Heart left ventricle (tissue), 16 donors: ENCODE measurements at regions of chr12 and their contacts with region 1.

Region 1: GRCh38 chr12:56763753-56764657 is 881 bp downstream of the HSD17B6 start:
- DNase-seq: no peak
- ATAC-seq: no peak
- H3K4me3 ChIP-seq: no peak overlapping the region
- H3K27ac ChIP-seq: peak overlapping the region in 1 of 12 donors; percentile 51
- H3K4me1 ChIP-seq: no peaks in the 10 kb centered on the region
- H3K27me3 ChIP-seq: no peaks in the 10 kb centered on the region
- CTCF ChIP-seq: no peak
- POLR2A ChIP-seq: no peak

Region 2: GRCh38 chr12:56724972-56725722 is 38.9 kb before region 1 on chr12 and contains the start of gene NACA:
- intact Hi-C with region 1: no loop called
- DNase-seq: peak; percentile 99 to 100 (median 99)
- ATAC-seq: peak; percentile 97 to 98 (median 97)
- H3K4me3 ChIP-seq: peak within 1 kb of the TSS; percentile 68 to 98 (median 82)
- H3K27ac ChIP-seq: peak within 1 kb of the TSS; percentile 79 to 97 (median 93)
- H3K4me1 ChIP-seq: peaks cover 9 to 54% (median 40%) of the 10 kb centered on the region in 12 donors
- H3K27me3 ChIP-seq: no peaks in the 10 kb centered on the region
- CTCF ChIP-seq: peak in 1 of 12 donors; percentile 15
- POLR2A ChIP-seq: peak in 1 of 2 donors; percentile 86
- total RNA-seq, gene NACA: 361 to 741 (median 537) TPM

Region 3: DNA sequence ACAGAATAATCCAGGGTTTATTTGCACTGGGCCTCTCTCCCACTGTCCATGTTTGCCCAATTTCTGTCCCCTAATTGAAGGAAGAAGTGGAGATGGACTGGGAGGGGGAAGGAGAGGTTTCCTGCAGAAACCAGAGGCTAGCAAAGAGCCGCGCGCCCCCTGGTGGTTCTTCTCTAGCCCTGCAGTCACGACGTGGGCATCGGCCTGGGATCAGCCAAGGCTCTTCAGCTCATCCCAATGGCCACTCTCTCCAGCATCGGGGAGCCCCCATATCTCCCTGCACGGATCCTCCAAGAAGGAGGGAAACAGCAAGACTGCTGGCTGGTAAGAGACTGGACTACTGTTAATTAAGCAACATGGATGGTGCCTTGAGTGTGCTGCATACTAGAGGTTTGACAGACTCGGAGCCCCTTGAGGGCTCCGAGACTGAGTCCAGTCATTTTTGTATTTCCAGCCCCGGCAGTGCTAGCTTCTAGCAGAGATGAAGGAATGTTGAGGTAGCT is 223.6 kb after region 1 on chr12:
- intact Hi-C with region 1: loop called (anchors 2 to 5 kb)
- DNase-seq: peak; percentile 74 to 91 (median 81)
- ATAC-seq: peak; percentile 70 to 92 (median 84)
- H3K4me3 ChIP-seq: peak overlapping the region in 1 of 12 donors; percentile 16
- H3K27ac ChIP-seq: peak overlapping the region in 4 of 12 donors; percentile 27 to 51 (median 38)
- H3K4me1 ChIP-seq: peaks cover 4 to 46% (median 28%) of the 10 kb centered on the region in 12 donors
- H3K27me3 ChIP-seq: no peaks in the 10 kb centered on the region
- CTCF ChIP-seq: peak; percentile 85 to 96 (median 90)
- POLR2A ChIP-seq: no peak

Region 4: DNA sequence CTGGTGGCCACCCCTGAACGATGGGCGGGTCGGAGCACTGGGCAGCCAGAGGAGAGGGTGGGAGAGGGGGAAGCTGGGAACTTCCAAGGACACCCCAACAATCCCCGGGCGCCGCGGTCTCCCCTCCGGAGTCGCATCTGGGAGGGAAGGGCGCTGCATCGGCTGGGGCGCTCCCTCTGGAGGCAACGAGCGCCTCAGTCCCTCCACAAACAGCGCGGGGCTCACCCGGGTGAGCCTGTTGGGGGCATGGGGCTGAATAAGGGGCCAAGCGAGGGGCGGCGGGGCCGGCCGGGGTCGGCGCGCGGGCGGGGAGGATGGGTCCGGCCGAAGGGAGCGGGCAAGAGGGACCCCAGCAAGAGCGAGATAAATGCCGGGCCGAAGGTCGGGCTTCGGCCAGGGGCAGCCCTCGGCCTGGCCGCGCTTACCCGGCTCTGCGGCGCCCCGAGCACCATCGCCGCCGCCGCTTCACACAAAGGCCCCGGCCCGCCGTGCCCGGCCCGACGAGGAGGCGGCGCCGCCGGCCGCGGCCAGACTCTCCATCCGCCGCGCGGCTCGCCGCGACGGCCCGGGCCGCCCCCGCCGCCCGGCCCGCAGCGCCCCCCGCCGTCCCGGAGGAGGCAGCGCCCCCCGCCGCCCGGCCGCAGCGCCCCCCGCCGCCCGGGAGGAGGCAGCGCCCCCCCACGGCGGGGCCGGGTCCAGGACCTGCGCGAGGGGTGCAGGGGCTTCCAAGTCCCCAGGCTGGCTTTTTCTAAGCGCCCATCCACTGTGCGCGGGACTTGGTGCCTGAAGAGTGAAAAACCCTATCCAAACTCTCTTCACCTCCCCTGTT is 242.2 kb after region 1 on chr12 and contains the start of gene ZBTB39:
- intact Hi-C with region 1: loop called in 7 of 10 experiments (anchors 5 kb)
- DNase-seq: peak; percentile 58 to 84 (median 68)
- ATAC-seq: peak; percentile 52 to 89 (median 76)
- H3K4me3 ChIP-seq: peak within 1 kb of the TSS; percentile 83 to 100 (median 96)
- H3K27ac ChIP-seq: peak within 1 kb of the TSS; percentile 19 to 92 (median 84)
- H3K4me1 ChIP-seq: peaks cover 0 to 30% (median 23%) of the 10 kb centered on the region in 12 donors
- H3K27me3 ChIP-seq: no peaks in the 10 kb centered on the region
- CTCF ChIP-seq: peak; percentile 40 to 76 (median 66)
- POLR2A ChIP-seq: no peak
- total RNA-seq, gene ZBTB39: 2.7 to 4.5 (median 3.6) TPM

Region 5: GRCh38 chr12:57063991-57064685 is 300.1 kb after region 1 on chr12:
- intact Hi-C with region 1: loop called in 7 of 10 experiments (anchors 2 to 5 kb)
- DNase-seq: no peak
- ATAC-seq: no peak
- H3K4me3 ChIP-seq: peak overlapping the region in 1 of 12 donors; percentile 35
- H3K27ac ChIP-seq: peak overlapping the region in 1 of 12 donors; percentile 88
- H3K4me1 ChIP-seq: peaks cover 0 to 25% (median 0%) of the 10 kb centered on the region in 12 donors
- H3K27me3 ChIP-seq: no peaks in the 10 kb centered on the region
- CTCF ChIP-seq: no peak
- POLR2A ChIP-seq: no peak

Region 6: DNA sequence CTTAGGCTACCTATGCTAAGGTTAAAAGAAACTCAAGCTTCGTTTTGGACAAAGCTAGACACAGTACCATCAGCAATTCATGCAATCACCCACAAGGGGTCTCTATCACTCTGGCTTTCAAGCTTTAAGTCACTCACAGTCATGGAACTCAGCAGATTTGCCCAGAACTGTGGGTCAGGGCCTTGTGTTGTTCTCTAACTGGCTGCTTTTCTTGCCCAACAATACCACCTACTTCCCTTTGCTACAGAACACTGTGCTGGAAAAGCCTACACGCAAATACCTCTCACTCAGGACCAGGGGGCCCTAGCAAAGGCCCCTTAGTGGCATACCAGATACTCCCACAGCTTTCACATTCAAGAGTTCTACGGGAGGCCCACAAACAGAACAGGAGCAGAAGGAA is 305.5 kb after region 1 on chr12:
- intact Hi-C with region 1: loop called in 6 of 10 experiments (anchors 5 kb)
- DNase-seq: peak in 4 of 5 donors; percentile 44 to 69 (median 65)
- ATAC-seq: peak; percentile 86 to 98 (median 96)
- H3K4me3 ChIP-seq: no peak overlapping the region
- H3K27ac ChIP-seq: peak overlapping the region in 9 of 12 donors; percentile 5 to 81 (median 40)
- H3K4me1 ChIP-seq: peaks cover 0 to 19% (median 3%) of the 10 kb centered on the region in 12 donors
- H3K27me3 ChIP-seq: no peaks in the 10 kb centered on the region
- CTCF ChIP-seq: peak; percentile 77 to 92 (median 89)
- POLR2A ChIP-seq: no peak